AG04449 (cell line): ENCODE measurements at regions of chr15 and their contacts with region 1.

Region 1: GRCh38 chr15:34587717-34588674 is 4.5 kb upstream of the GOLGA8B start:
- DNase-seq: peak; percentile 33
- H3K4me3 ChIP-seq: peak overlapping the region; percentile 42
- CTCF ChIP-seq: peak; percentile 71

Region 2: GRCh38 chr15:34059471-34059870 is 528.5 kb before region 1 on chr15:
- CTCF ChIA-PET with region 1: interaction called, 12 read pairs
- POLR2A ChIA-PET with region 1: no interaction called
- DNase-seq: no peak
- H3K4me3 ChIP-seq: no peak overlapping the region
- CTCF ChIP-seq: no peak

Region 3: DNA sequence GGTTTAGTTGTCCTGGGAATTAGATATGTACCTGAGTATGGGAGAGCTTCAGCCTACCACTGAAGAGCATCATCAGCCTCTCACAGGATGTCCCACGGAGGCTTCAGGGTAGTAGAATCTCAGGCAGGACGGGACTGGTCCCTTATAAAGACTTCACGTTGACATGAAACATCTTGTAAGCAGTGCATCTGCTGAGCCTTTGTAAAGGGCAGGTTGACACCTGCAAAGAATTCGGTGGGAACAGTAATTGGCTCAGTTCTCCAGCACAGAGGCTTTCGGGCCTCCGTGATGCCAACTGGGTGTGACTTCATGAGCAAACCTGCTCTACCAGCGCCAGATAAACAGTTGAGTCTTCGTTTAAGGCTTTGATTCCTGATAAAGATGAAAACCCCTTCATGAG is 522.1 kb before region 1 on chr15:
- CTCF ChIA-PET with region 1: interaction called, 12 read pairs
- POLR2A ChIA-PET with region 1: no interaction called
- DNase-seq: no peak
- H3K4me3 ChIP-seq: no peak overlapping the region
- CTCF ChIP-seq: no peak

Region 4: GRCh38 chr15:34109797-34110663 is 478.0 kb before region 1 on chr15:
- CTCF ChIA-PET with region 1: interaction called, 19 read pairs
- POLR2A ChIA-PET with region 1: no interaction called
- DNase-seq: no peak
- H3K4me3 ChIP-seq: no peak overlapping the region
- CTCF ChIP-seq: peak; percentile 59

Region 5: DNA sequence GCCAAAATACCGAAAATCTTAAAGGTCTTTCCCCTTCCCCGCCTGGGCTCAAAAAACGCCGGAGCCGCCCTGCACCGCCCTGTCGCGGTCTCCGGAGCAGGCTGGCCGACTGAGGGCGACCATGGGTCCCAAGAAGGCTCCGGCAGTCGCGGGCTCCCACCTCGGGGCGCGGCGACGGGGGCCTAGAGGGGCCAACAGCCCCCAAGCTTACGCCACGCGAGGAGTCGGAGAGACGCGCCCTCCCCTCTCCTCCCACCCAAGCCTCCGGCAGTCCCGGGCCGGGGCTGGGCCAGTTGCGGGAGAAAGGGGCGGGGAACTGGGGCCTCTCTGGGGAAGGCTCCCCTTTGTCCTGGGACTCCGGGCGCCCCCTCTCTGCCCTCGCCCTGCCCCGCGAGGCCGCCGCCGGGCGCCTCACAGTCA is 73.7 kb before region 1 on chr15:
- CTCF ChIA-PET with region 1: interaction called, 15 read pairs
- POLR2A ChIA-PET with region 1: interaction called, 3 read pairs
- DNase-seq: no peak
- H3K4me3 ChIP-seq: peak overlapping the region; percentile 61
- CTCF ChIP-seq: no peak